ENCODE measurements at regions of chr4 and their contacts with region 1.

Region 1: DNA sequence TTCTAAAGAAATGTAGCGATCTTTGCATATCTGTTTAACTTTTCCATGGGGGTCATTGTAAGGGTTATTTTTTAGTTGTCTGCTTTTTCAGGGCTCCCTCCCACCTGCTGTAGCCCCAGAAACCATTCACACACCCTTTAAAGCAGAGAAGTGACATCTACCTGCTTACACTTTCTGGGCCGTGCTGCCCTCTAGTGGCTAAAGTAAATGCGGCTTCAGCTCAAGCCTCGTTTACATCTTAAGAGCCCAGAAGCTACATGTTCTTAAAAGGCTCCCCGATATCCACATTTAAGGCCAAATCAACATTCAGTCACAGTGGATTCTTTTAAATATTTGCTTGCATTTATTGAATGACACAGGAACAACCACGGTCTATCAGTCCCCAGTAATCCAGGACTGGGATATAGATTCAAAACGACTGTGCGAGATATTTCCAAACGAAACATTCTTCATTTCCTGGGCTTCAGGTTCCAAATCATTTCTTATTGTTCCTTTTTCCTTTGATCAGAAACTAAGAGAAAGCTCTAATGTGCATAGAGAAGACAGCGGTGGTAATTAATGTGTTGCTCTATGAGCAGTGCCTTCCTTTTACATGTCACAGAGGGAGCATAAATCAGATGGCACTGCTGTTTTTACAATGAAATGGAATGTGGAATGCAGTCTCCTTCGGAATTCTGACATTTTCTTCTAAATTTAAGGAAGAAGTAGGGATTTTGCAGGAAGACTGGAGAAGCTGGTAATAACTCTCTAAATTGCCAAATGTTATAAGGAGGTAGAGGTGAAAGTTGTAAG is 119.9 kb downstream of the RASGEF1B start:
- DNase-seq: peak; percentile 63

Region 2: GRCh38 chr4:81069706-81070331 is 282.0 kb before region 1 on chr4:
- CTCF ChIA-PET with region 1: interaction called, 13 read pairs
- POLR2A ChIA-PET with region 1: no interaction called
- DNase-seq: peak; percentile 69

Region 3: DNA sequence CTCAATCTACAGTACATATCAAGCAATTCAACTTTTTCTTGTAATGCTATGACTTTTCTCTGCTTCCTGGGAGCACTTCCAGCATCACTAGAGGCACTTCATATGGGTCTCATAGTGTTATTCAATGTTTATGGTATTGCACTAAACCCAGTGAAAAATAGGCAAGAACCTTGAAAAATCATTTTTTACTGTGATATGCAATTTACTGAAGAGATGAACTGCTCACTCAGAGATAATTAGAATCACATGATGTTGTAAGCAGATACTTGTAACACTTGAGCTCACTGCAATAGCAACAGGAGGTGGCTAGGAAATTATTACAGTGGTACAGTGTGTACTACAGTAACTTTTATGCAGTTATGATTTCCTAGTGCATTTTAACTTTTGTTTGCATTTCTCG is 26.5 kb after region 1 on chr4:
- CTCF ChIA-PET with region 1: no interaction called
- POLR2A ChIA-PET with region 1: no interaction called
- DNase-seq: no peak

Region 4: DNA sequence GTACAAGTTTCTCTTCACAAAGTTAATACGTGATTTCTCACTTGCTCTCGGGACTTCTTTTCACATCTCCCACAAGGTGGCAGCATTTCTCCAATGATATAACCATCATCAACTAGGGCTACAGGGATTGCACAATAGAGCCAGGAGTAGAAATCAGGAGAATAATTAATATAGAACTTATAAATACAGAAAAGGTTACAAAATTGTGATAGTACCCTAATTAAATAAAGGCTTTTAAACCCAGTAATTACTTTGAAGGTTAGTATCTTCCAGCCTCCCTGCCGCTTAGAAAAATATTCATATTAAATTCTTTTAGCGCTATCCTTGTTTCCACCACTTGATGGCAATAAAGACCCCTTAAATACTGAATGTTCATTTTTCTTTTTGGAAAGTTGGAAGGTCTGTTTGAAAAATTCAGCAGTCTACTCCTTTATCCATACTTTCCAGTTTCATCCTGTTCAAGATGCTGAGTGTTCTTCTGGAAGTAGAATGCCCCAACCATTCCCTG is 54.1 kb after region 1 on chr4:
- CTCF ChIA-PET with region 1: no interaction called
- POLR2A ChIA-PET with region 1: no interaction called
- DNase-seq: peak; percentile 60

Region 5: GRCh38 chr4:81523672-81524327 is 171.9 kb after region 1 on chr4:
- CTCF ChIA-PET with region 1: no interaction called
- POLR2A ChIA-PET with region 1: no interaction called
- DNase-seq: no peak

Measured in HEK293T (cell line).